AG04450 (cell line): ENCODE measurements at regions of chr10 and their contacts with region 1.

Region 1: GRCh38 chr10:63720072-63720537 is 198.9 kb downstream of the REEP3 start:
- DNase-seq: no peak
- H3K4me3 ChIP-seq: no peak overlapping the region
- H3K27ac ChIP-seq: no peak overlapping the region
- H3K27me3 ChIP-seq: no peaks in the 10 kb centered on the region
- CTCF ChIP-seq: peak; percentile 98

Region 2: GRCh38 chr10:63166742-63167258 is 553.3 kb before region 1 on chr10:
- CTCF ChIA-PET with region 1: interaction called, 363 read pairs
- POLR2A ChIA-PET with region 1: no interaction called
- DNase-seq: peak; percentile 65
- H3K4me3 ChIP-seq: no peak overlapping the region
- H3K27ac ChIP-seq: no peak overlapping the region
- H3K27me3 ChIP-seq: no peaks in the 10 kb centered on the region
- CTCF ChIP-seq: peak; percentile 92

Region 3: GRCh38 chr10:63217120-63217605 is 502.9 kb before region 1 on chr10:
- CTCF ChIA-PET with region 1: interaction called, 64 read pairs
- POLR2A ChIA-PET with region 1: no interaction called
- DNase-seq: no peak
- H3K4me3 ChIP-seq: no peak overlapping the region
- H3K27ac ChIP-seq: no peak overlapping the region
- H3K27me3 ChIP-seq: no peaks in the 10 kb centered on the region
- CTCF ChIP-seq: peak; percentile 66

Region 4: DNA sequence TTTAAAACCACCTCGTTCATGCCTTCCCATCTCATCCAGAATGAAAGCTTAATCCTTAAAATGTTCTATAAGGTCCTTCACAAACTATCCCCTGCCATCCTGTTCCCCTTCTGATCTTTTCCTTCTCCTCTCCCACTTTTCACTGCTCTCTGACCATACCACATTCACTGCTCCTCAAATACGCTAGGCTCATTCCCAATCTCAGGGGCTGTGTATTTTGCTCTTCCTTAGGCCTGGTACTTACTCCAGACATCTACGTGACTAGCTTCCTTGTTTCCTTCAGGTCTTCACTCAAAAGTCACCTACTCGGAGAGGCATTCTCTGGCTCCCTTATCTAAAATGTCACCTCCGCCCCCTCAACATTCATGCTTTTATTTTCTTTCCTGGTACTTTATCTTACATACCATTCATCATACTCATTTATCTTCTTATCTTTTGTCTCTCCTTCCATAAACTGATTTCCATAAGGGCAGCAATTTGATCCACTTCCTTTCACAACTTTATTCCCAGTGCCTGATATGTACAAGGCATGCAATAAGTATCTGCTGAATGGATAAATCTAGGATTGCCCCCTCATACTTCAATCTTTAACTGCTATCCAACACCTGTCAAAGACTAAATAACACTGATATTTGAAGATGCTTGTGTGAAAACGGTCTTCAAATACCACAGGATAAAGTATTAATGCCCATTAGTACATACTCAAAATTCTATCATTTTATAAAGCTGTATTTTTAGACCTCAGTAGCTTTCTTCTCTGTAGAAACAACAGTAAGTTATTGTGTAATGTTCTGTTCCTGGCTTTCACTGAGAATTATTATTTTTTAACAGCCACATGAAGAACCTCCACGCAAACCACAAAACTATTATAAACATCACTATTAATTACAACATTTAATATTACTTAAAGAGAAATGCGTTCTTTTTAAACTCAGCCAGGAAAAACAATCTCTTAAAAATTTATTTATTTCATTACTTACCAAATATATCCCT is 281.3 kb before region 1 on chr10:
- CTCF ChIA-PET with region 1: no interaction called
- POLR2A ChIA-PET with region 1: no interaction called
- DNase-seq: no peak
- H3K4me3 ChIP-seq: no peak overlapping the region
- H3K27ac ChIP-seq: no peak overlapping the region
- H3K27me3 ChIP-seq: no peaks in the 10 kb centered on the region
- CTCF ChIP-seq: no peak

Region 5: GRCh38 chr10:63478564-63478963 is 241.5 kb before region 1 on chr10:
- CTCF ChIA-PET with region 1: no interaction called
- POLR2A ChIA-PET with region 1: no interaction called
- DNase-seq: no peak
- H3K4me3 ChIP-seq: no peak overlapping the region
- H3K27ac ChIP-seq: no peak overlapping the region
- H3K27me3 ChIP-seq: no peaks in the 10 kb centered on the region
- CTCF ChIP-seq: no peak

Region 6: DNA sequence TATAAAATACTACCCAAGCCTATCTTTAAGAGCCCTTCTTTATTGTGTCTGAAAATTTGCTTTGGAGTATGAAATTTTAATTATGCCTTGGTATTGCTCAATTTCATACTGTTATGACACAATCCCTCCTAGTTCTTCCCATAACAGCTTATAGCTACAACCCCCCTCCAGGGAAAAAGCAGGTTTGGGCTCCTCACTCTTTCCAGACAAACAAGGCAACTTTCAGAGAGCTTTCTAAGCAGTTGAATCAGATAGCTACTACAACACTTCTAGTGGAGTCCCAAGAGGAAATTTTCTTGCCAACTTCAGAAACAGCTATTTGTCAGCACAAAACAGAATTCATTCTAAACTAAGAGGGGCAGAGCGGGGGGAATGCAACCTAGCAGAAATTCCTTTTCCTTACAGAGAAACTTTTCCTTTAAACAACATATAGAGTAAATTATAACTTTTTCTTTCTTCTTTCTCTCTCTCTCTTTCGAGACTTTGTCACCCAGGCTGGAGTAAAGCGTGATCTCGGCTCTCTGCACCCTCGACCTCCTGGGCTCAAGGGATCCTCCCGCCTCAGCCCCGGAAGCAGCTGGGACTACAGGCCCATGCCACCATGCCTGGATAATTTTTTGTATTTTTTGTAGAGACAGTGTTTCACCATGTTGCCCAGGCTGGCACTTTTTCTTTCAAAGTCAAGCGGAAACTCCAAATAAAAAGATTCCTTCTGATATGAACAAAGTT is 228.4 kb before region 1 on chr10:
- CTCF ChIA-PET with region 1: interaction called, 10 read pairs
- POLR2A ChIA-PET with region 1: no interaction called
- DNase-seq: no peak
- H3K4me3 ChIP-seq: no peak overlapping the region
- H3K27ac ChIP-seq: peak overlapping the region; percentile 53
- H3K27me3 ChIP-seq: no peaks in the 10 kb centered on the region
- CTCF ChIP-seq: no peak

Region 7: GRCh38 chr10:63707254-63707910 is 12.7 kb before region 1 on chr10:
- CTCF ChIA-PET with region 1: interaction called, 33 read pairs
- POLR2A ChIA-PET with region 1: no interaction called
- DNase-seq: peak; percentile 94
- H3K4me3 ChIP-seq: no peak overlapping the region
- H3K27ac ChIP-seq: no peak overlapping the region
- H3K27me3 ChIP-seq: no peaks in the 10 kb centered on the region
- CTCF ChIP-seq: no peak

Region 8: DNA sequence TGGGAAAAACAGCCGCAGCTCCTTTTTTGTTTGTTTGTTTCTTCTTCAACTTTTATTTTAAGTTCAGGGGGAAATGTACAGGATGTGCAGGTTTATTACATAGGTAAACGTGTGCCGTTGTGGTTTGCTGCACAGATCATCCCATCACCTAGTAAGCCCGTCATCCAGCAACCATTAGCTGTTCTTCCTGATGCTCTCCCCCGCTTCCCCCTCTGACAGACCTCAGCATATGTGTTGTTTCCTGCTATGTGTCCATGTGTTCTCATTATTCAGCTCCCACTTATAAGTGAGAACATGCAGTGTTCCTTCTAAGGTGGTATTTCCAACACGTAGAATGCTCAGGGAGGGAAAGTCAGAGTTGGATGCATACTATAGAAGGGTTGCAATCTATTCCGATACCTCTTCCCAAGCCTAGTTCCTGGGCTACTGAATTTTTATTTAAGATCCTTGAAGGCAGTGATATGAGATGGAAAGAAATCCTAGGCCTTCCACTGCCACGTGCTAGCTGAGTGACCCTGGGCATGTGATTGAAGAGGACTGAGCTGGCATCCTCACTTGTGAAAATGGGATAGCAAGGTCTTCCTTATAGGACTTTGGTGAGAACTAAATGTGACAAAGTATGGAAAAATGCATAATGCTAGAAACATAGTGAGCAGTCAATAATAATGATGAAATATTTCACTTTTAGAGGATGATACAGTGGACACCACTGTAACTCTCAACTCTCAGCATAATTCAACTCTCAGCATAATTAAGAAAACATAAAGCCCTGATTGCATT is 79.6 kb after region 1 on chr10:
- CTCF ChIA-PET with region 1: no interaction called
- POLR2A ChIA-PET with region 1: no interaction called
- DNase-seq: no peak
- H3K4me3 ChIP-seq: no peak overlapping the region
- H3K27ac ChIP-seq: no peak overlapping the region
- H3K27me3 ChIP-seq: peaks cover 3% of the 10 kb centered on the region
- CTCF ChIP-seq: no peak

Region 9: GRCh38 chr10:64091897-64092296 is 371.8 kb after region 1 on chr10:
- CTCF ChIA-PET with region 1: no interaction called
- POLR2A ChIA-PET with region 1: no interaction called
- DNase-seq: no peak
- H3K4me3 ChIP-seq: no peak overlapping the region
- H3K27ac ChIP-seq: no peak overlapping the region
- H3K27me3 ChIP-seq: no peaks in the 10 kb centered on the region
- CTCF ChIP-seq: no peak